Heart right ventricle (tissue), 16 donors: ENCODE measurements at regions of chr7 and their contacts with region 1.

Region 1: GRCh38 chr7:87003872-87004798 is 55.3 kb downstream of the ELAPOR2 start:
- DNase-seq: no peak
- ATAC-seq: peak in 4 of 8 donors; percentile 33 to 69 (median 55)
- H3K4me3 ChIP-seq: peak overlapping the region in 3 of 10 donors; percentile 4 to 21 (median 8)
- H3K27ac ChIP-seq: peak overlapping the region in 2 of 10 donors; percentile 11 to 47
- H3K4me1 ChIP-seq: peaks cover 0 to 38% (median 20%) of the 10 kb centered on the region in 9 donors
- H3K27me3 ChIP-seq: no peaks in the 10 kb centered on the region
- CTCF ChIP-seq: no peak

Region 2: GRCh38 chr7:87032604-87033339 is 28.6 kb after region 1 on chr7:
- intact Hi-C with region 1: loop called in 1 of 10 experiments (anchors 1 kb)
- DNase-seq: no peak
- ATAC-seq: no peak
- H3K4me3 ChIP-seq: no peak overlapping the region
- H3K27ac ChIP-seq: no peak overlapping the region
- H3K4me1 ChIP-seq: no peaks in the 10 kb centered on the region
- H3K27me3 ChIP-seq: no peaks in the 10 kb centered on the region
- CTCF ChIP-seq: no peak